ENCODE measurements at regions of chr12 and their contacts with region 1.

Region 1: DNA sequence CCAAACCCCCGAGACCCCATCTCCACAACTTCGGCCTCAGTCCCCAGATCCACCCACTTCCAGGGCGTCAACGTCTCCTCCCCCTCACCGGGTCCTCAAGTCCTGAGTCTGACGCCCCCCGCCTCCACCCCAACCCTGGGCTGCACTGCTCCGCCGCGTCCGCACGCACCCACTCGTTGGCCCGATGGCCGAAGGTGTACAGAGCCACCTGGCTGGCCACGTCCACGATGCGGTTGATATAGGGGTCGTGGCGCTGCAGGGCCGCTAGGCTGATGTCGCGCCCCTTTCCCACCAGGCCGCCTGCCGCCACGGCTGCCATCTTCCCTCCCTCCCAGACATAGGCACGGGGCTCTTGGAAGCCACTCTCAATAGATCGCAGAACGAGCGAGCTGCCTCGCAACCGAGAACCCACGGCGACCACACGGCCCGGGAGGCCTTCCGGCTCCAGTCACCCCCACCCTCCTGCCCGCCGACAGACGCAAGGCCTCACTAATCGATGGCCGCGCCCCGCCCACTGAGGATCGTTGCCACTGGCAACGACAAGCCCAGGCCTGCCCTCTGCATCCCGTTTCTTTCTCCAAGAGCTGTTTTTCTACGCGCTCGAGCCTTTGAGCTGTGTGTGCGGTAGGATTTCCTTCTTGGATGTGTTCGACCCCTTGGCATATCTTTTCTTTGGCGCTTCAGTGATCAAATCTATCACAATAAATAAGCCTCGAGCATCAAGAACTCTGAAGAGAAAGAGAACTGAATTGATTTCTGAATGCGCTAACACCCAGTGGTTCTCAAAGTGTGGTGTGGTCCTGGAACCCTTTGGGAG is at the start of gene DCP1B:
- DNase-seq: peak; percentile 95
- ATAC-seq: peak; percentile 99
- H3K4me3 ChIP-seq: peak within 1 kb of the TSS; percentile 64 to 92 (median 92)
- H3K4me3 Mint-ChIP-seq: peak within 1 kb of the TSS; percentile 99
- H3K27ac ChIP-seq: peak within 1 kb of the TSS; percentile 81 to 93
- H3K27ac Mint-ChIP-seq: peak within 1 kb of the TSS; percentile 99
- H3K4me1 ChIP-seq: peaks cover 11 to 15% of the 10 kb centered on the region in 2 donors
- H3K4me1 Mint-ChIP-seq: peaks cover 26% of the 10 kb centered on the region
- H3K27me3 ChIP-seq: no peaks in the 10 kb centered on the region
- H3K27me3 Mint-ChIP-seq: no peaks in the 10 kb centered on the region
- CTCF ChIP-seq: no peak
- total RNA-seq, gene DCP1B: 18.0 and 18.1 TPM in 2 replicates

Region 2: GRCh38 chr12:1804545-1805332 is 199.6 kb before region 1 on chr12:
- CTCF ChIA-PET with region 1: no interaction called
- POLR2A ChIA-PET with region 1: no interaction called
- intact Hi-C with region 1: loop called (anchors 1 kb)
- DNase-seq: peak; percentile 89
- ATAC-seq: peak; percentile 78
- H3K4me3 ChIP-seq: peak overlapping the region in 1 of 5 experiments; percentile 21
- H3K4me3 Mint-ChIP-seq: peak overlapping the region; percentile 54
- H3K27ac ChIP-seq: peak overlapping the region in 1 of 2 donors; percentile 33
- H3K27ac Mint-ChIP-seq: peak overlapping the region; percentile 69
- H3K4me1 ChIP-seq: peaks cover 5 to 23% of the 10 kb centered on the region in 2 donors
- H3K4me1 Mint-ChIP-seq: peaks cover 25% of the 10 kb centered on the region
- H3K27me3 ChIP-seq: no peaks in the 10 kb centered on the region
- H3K27me3 Mint-ChIP-seq: no peaks in the 10 kb centered on the region
- CTCF ChIP-seq: no peak

Region 3: DNA sequence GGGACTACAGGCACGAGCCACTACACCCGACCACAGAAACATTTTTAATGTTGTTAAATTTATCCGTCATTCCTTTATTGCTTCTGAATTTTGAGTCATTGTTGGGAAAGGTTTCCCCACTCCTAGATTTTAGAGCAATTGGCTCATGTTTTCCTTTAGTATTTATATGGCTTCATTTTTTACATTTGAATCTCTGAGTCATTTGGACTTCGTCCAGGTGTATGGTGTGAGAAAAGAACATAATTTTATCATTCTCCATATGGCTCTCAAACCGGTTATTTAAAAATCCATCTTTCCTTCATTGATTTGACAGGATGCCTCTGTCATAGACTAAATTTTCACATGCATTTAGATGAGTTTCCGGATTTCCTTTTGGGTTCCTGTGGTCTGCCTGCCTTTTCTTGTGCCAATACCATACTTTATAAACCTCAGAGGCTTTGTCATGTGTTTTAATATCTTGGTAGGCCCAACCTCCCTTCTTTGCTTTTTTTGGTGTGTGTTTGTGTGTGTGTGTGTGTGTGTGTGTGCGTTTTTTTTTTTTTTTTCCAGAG is 153.1 kb before region 1 on chr12:
- CTCF ChIA-PET with region 1: no interaction called
- POLR2A ChIA-PET with region 1: no interaction called
- intact Hi-C with region 1: no loop called
- DNase-seq: no peak
- ATAC-seq: no peak
- H3K4me3 ChIP-seq: no peak overlapping the region
- H3K4me3 Mint-ChIP-seq: no peak overlapping the region
- H3K27ac ChIP-seq: no peak overlapping the region
- H3K27ac Mint-ChIP-seq: no peak overlapping the region
- H3K4me1 ChIP-seq: no peaks in the 10 kb centered on the region
- H3K4me1 Mint-ChIP-seq: no peaks in the 10 kb centered on the region
- H3K27me3 ChIP-seq: no peaks in the 10 kb centered on the region
- H3K27me3 Mint-ChIP-seq: no peaks in the 10 kb centered on the region
- CTCF ChIP-seq: no peak

Region 4: GRCh38 chr12:2034633-2035430 is 30.5 kb after region 1 on chr12:
- CTCF ChIA-PET with region 1: interaction called, 5 read pairs
- POLR2A ChIA-PET with region 1: no interaction called
- intact Hi-C with region 1: loop called (anchors 2 kb)
- DNase-seq: peak; percentile 86
- ATAC-seq: peak; percentile 97
- H3K4me3 ChIP-seq: peak overlapping the region; percentile 20 to 61 (median 47)
- H3K4me3 Mint-ChIP-seq: peak overlapping the region; percentile 71
- H3K27ac ChIP-seq: no peak overlapping the region
- H3K27ac Mint-ChIP-seq: no peak overlapping the region
- H3K4me1 ChIP-seq: peaks cover 8 to 9% of the 10 kb centered on the region in 2 donors
- H3K4me1 Mint-ChIP-seq: peaks cover 9% of the 10 kb centered on the region
- H3K27me3 ChIP-seq: peaks cover 0 to 61% (median 33%) of the 10 kb centered on the region in 4 experiments
- H3K27me3 Mint-ChIP-seq: peaks cover 52% of the 10 kb centered on the region
- CTCF ChIP-seq: peak; percentile 91

Measured in B cell (primary cell).